Activated CD4-positive, alpha-beta memory T cell treated with anti-CD3 and anti-CD28 coated beads for 36 hours (primary cell): ENCODE measurements at regions of chr15 and their contacts with region 1.

Region 1: GRCh38 chr15:74906446-74907162 is at the start of gene FAM219B:
- DNase-seq: peak; percentile 89
- H3K4me3 Mint-ChIP-seq: peak within 1 kb of the TSS; percentile 99
- H3K27ac Mint-ChIP-seq: peak within 1 kb of the TSS; percentile 97
- H3K4me1 Mint-ChIP-seq: peaks cover 32% of the 10 kb centered on the region
- H3K27me3 Mint-ChIP-seq: no peaks in the 10 kb centered on the region
- total RNA-seq, gene FAM219B: 63.0 to 70.1 TPM

Region 2: GRCh38 chr15:73284090-73284716 is 1622.4 kb before region 1 on chr15:
- CTCF ChIA-PET with region 1: no interaction called
- POLR2A ChIA-PET with region 1: no interaction called
- intact Hi-C with region 1: no loop called
- DNase-seq: no peak
- H3K4me3 Mint-ChIP-seq: no peak overlapping the region
- H3K27ac Mint-ChIP-seq: no peak overlapping the region
- H3K4me1 Mint-ChIP-seq: peaks cover 13% of the 10 kb centered on the region
- H3K27me3 Mint-ChIP-seq: no peaks in the 10 kb centered on the region

Region 3: DNA sequence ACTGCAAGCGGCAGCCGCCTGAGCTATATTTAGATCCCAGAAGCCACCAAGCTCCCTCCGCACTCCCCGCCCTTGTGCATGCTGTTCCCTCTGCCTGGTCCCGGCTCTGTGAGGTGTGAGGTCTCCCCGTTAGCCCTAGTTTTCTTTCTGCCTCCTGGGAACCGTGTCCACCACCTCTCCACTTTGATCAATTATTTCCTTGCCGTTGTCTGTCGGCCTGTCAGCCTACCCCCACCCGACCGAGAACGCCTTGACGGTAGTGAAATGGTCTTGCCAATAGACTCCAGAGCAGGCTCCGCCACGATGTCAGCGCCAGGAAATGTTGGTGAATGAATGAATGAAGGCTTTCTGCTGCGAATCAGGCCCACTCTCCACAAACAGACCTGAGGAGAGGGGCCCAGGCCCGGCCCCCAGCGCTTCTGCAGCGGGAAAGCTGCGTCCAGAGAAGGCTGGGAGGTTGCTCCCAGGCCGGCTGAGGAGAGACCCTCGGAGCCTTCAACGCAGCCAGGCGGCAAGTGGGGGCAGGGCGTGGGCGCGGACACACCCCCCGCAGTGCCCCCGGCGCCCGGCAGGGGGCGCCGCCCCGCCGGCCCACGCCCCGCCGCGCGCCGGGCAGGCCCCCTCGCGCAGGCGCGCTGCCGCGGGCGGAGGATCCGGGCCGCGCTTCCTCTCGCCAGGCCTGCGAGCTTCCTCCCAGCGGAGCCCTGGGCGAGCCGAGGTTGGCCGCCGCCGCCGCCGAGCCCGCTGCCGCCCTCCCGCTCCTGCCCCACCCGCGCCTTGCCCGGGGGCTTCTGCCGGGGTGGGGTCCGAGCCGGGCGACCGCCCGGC is 125.0 kb before region 1 on chr15 and contains the start of gene CSK:
- CTCF ChIA-PET with region 1: interaction called, 13 read pairs
- POLR2A ChIA-PET with region 1: interaction called, 4 read pairs
- intact Hi-C with region 1: no loop called
- DNase-seq: peak; percentile 83
- H3K4me3 Mint-ChIP-seq: peak within 1 kb of the TSS; percentile 90
- H3K27ac Mint-ChIP-seq: peak within 1 kb of the TSS; percentile 99
- H3K4me1 Mint-ChIP-seq: peaks cover 50% of the 10 kb centered on the region
- H3K27me3 Mint-ChIP-seq: no peaks in the 10 kb centered on the region
- total RNA-seq, gene CSK: 260 to 262 TPM

Region 4: GRCh38 chr15:74826364-74826819 is 80.2 kb before region 1 on chr15 and contains the start of gene CPLX3:
- CTCF ChIA-PET with region 1: interaction called, 10 read pairs
- POLR2A ChIA-PET with region 1: no interaction called
- intact Hi-C with region 1: no loop called
- DNase-seq: peak; percentile 54
- H3K4me3 Mint-ChIP-seq: no peak within 1 kb of the TSS
- H3K27ac Mint-ChIP-seq: no peak within 1 kb of the TSS
- H3K4me1 Mint-ChIP-seq: peaks cover 14% of the 10 kb centered on the region
- H3K27me3 Mint-ChIP-seq: peaks cover 17% of the 10 kb centered on the region
- total RNA-seq, gene CPLX3: not detected

Region 5: DNA sequence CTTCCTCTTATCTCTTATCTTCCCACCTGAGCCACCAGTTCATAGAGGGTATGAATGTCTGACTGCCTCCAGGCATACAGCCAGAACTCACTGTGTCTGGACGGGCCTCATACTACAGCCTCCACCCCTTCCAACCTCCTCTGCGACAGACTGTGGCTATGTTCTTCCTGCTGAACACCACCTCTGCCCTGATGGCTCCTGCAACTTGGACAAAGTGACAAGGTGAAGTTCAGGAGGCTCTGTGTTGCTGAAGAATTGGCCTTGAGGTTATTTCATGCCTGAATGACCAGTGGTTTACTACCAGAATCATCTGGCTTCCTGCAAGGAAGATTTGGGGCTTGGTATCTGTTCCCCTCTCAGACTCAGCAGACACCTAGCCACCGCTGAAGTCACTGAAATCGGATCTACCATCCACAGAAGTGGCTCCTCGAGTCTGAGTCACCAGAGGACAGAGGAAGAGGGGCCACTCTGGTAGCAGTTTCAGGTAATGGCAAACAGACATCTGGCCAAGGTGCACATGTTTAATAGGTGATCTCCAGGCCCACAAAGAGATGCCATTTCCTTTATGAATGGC is 49.4 kb before region 1 on chr15:
- CTCF ChIA-PET with region 1: interaction called, 24 read pairs
- POLR2A ChIA-PET with region 1: interaction called, 3 read pairs
- intact Hi-C with region 1: no loop called
- DNase-seq: no peak
- H3K4me3 Mint-ChIP-seq: no peak overlapping the region
- H3K27ac Mint-ChIP-seq: peak overlapping the region; percentile 34
- H3K4me1 Mint-ChIP-seq: peaks cover 27% of the 10 kb centered on the region
- H3K27me3 Mint-ChIP-seq: no peaks in the 10 kb centered on the region

Region 6: DNA sequence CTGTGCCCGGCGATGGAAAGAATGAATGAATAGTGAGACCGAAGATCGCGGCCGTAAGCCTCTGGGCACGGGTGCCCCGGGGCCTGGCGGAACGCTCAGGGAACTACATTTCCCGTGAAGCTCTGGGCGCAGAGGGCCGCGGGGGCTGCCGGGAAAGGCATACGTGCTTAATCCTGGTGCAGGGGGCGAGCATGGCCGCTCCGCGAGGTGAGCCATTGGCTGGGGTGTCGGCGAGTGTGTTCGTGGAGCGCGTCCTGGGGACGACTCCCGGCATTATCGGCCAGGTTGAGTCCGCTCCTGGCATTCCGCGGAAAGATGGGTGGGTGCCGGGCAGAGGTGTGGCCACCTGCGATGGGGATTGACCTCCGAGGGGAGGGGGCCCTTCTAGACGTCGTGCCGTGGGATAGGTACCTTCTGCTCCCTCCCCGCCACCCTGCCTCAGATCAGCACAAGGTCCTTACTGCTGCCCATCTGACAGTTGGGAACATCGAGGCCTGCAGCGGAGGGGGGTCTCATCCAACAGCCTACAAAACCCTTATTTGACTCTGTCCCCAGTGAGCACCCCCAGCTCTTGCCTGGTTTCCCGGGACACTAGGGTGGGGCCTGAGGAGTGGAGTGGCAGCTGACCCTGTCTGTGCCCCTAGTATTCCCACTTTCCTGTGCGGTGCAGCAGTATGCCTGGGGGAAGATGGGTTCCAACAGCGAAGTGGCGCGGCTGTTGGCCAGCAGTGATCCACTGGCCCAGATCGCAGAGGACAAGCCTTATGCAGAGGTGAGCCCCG is 16.5 kb before region 1 on chr15 and contains the start of gene MPI:
- CTCF ChIA-PET with region 1: interaction called, 32 read pairs
- POLR2A ChIA-PET with region 1: interaction called, 5 read pairs
- intact Hi-C with region 1: loop called (anchors 1 kb)
- DNase-seq: peak; percentile 93
- H3K4me3 Mint-ChIP-seq: peak within 1 kb of the TSS; percentile 90
- H3K27ac Mint-ChIP-seq: peak within 1 kb of the TSS; percentile 76
- H3K4me1 Mint-ChIP-seq: peaks cover 44% of the 10 kb centered on the region
- H3K27me3 Mint-ChIP-seq: no peaks in the 10 kb centered on the region
- total RNA-seq, gene MPI: 56.4 to 60.0 TPM